H1 (cell line): ENCODE measurements at regions of chr10 and their contacts with region 1.

Region 1: GRCh38 chr10:13613519-13613918 is 26.8 kb downstream of the PRPF18 start:
- DNase-seq: no peak
- H3K4me3 ChIP-seq: no peak overlapping the region
- H3K27ac ChIP-seq: no peak overlapping the region
- H3K4me1 ChIP-seq: peaks cover 0 to 10% (median 2%) of the 10 kb centered on the region in 4 experiments; a peak in 5 of 7 replicates
- H3K27me3 ChIP-seq: no peaks in the 10 kb centered on the region
- CTCF ChIP-seq: peak in 2 of 3 experiments; percentile 40 to 42; a peak in 2 of 4 replicates
- EP300 ChIP-seq: no peak
- POLR2A ChIP-seq: no peak
- RAD21 ChIP-seq: peak; percentile 64 to 66

Region 2: GRCh38 chr10:13219685-13220670 is 393.5 kb before region 1 on chr10:
- CTCF ChIA-PET with region 1: no interaction called
- POLR2A ChIA-PET with region 1: no interaction called
- DNase-seq: peak; percentile 46 to 63
- H3K4me3 ChIP-seq: no peak overlapping the region
- H3K27ac ChIP-seq: no peak overlapping the region
- H3K4me1 ChIP-seq: peaks cover 0 to 5% (median 0%) of the 10 kb centered on the region in 4 experiments; a peak in 3 of 7 replicates
- H3K27me3 ChIP-seq: no peaks in the 10 kb centered on the region
- CTCF ChIP-seq: peak; percentile 58 to 66 (median 63)
- EP300 ChIP-seq: no peak
- POLR2A ChIP-seq: no peak
- RAD21 ChIP-seq: peak; percentile 53 to 62

Region 3: DNA sequence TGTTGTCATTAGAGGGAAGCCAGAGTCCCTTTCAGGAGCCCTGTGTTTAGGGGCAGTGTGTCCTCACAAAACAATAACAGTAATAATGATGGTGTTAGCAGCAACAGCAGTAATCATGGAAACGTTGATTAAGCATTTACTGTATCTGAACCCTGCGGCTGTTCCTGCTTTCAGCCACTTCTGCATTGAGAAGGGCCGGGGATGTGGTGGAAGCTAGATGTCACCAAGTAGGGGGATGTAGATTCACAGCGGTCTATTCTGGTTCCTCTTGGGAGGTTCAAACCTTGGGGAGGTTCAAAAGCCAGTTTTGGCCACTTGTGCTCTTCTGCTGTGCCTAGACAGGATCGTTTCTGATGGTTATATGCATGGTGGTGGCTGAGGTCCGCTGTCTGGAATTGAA is 18.1 kb after region 1 on chr10:
- CTCF ChIA-PET with region 1: interaction called, 10 read pairs
- POLR2A ChIA-PET with region 1: interaction called, 8 read pairs
- DNase-seq: no peak
- H3K4me3 ChIP-seq: no peak overlapping the region
- H3K27ac ChIP-seq: no peak overlapping the region
- H3K4me1 ChIP-seq: peaks cover 0 to 9% (median 4%) of the 10 kb centered on the region in 4 experiments; a peak in 4 of 7 replicates
- H3K27me3 ChIP-seq: no peaks in the 10 kb centered on the region
- CTCF ChIP-seq: no peak
- EP300 ChIP-seq: no peak
- POLR2A ChIP-seq: no peak
- RAD21 ChIP-seq: no peak

Region 4: GRCh38 chr10:13651969-13652720 is 38.6 kb after region 1 on chr10:
- CTCF ChIA-PET with region 1: interaction called, 29 read pairs
- POLR2A ChIA-PET with region 1: no interaction called
- DNase-seq: no peak
- H3K4me3 ChIP-seq: no peak overlapping the region
- H3K27ac ChIP-seq: no peak overlapping the region
- H3K4me1 ChIP-seq: no peaks in the 10 kb centered on the region
- H3K27me3 ChIP-seq: no peaks in the 10 kb centered on the region; a peak in 1 of 7 replicates
- CTCF ChIP-seq: no peak
- EP300 ChIP-seq: no peak
- POLR2A ChIP-seq: no peak
- RAD21 ChIP-seq: no peak